ENCODE measurements at regions of chr17 and their contacts with region 1.

Region 1: GRCh38 chr17:4691686-4692085 is 12.3 kb downstream of the PELP1 start:
- DNase-seq: no peak
- H3K4me3 ChIP-seq: no peak overlapping the region
- H3K27ac ChIP-seq: no peak overlapping the region
- H3K4me1 ChIP-seq: no peaks in the 10 kb centered on the region
- H3K27me3 ChIP-seq: no peaks in the 10 kb centered on the region
- CTCF ChIP-seq: no peak

Region 2: GRCh38 chr17:4610162-4610561 is 81.5 kb before region 1 on chr17:
- CTCF ChIA-PET with region 1: no interaction called
- dilution Hi-C with region 1: loop called (anchors 5 kb)
- in situ Hi-C with region 1: no loop called
- intact Hi-C with region 1: no loop called
- DNase-seq: no peak
- H3K4me3 ChIP-seq: no peak overlapping the region
- H3K27ac ChIP-seq: no peak overlapping the region
- H3K4me1 ChIP-seq: no peaks in the 10 kb centered on the region
- H3K27me3 ChIP-seq: peaks cover 2% of the 10 kb centered on the region
- CTCF ChIP-seq: no peak

Region 3: DNA sequence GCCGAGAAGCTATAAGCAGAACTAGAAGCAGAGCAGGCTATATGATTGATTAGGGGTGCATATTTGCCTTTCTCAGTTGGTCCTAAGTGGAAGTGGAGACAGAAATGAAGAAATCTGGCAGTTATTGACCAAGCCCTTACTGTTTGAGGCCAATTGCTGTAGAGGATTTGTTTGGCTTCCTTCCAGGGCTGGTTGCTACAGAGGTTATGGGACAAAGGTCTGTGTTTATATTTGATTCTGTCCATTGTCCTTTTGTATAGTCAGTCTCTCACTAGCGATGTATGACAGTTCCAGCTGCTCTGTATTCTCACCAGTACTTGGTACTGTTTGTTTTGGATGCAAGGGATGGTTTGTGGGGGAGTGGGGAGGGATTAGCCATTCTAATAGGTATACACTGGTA is 42.9 kb before region 1 on chr17:
- CTCF ChIA-PET with region 1: no interaction called
- dilution Hi-C with region 1: loop called (anchors 5 kb)
- in situ Hi-C with region 1: no loop called
- intact Hi-C with region 1: no loop called
- DNase-seq: no peak
- H3K4me3 ChIP-seq: no peak overlapping the region
- H3K27ac ChIP-seq: no peak overlapping the region
- H3K4me1 ChIP-seq: no peaks in the 10 kb centered on the region
- H3K27me3 ChIP-seq: peaks cover 5% of the 10 kb centered on the region
- CTCF ChIP-seq: no peak

Region 4: GRCh38 chr17:4663711-4664110 is 28.0 kb before region 1 on chr17:
- CTCF ChIA-PET with region 1: no interaction called
- dilution Hi-C with region 1: no loop called
- in situ Hi-C with region 1: no loop called
- intact Hi-C with region 1: no loop called
- DNase-seq: no peak
- H3K4me3 ChIP-seq: no peak overlapping the region
- H3K27ac ChIP-seq: no peak overlapping the region
- H3K4me1 ChIP-seq: no peaks in the 10 kb centered on the region
- H3K27me3 ChIP-seq: no peaks in the 10 kb centered on the region
- CTCF ChIP-seq: no peak

Measured in mammary epithelial cell (primary cell).